CD4-positive, alpha-beta memory T cell (primary cell): ENCODE measurements at regions of chr17 and their contacts with region 1.

Region 1: DNA sequence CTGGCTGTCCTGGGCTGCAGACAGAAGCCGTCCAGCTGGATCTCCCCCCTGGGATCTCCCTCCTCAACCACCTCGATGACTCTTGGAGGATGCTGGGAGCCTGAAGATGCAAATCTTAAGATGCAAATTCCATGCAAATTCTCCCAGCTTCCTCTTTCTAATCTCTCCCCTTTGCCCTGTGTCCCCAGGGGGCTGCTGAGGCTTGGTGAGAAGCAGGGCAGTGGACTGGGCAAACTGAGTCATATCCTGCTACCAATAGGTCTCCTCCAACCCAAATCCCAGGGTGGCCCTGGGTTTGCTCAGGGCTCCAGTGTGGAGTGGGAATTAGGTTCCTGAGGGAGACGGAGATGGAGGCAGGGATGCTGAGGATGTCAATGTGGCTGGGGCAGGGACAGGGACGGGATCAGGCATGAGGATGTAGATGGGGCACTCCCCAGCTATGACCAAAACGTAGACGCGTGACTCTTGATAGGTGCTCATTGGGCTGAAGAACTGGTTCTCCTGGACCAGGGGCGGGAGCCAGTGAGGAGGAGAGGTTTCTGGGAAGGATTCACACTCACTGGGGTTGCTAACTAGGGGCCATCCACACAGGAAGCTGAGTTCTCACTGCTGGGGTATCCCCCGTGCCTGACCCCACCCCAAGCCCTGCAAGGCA is 3.6 kb upstream of the ALOX12B start:
- DNase-seq: no peak
- H3K4me3 ChIP-seq: no peak overlapping the region
- H3K4me3 Mint-ChIP-seq: peak overlapping the region in 1 of 8 donors; percentile 26
- H3K27ac ChIP-seq: no peak overlapping the region
- H3K27ac Mint-ChIP-seq: no peak overlapping the region
- H3K4me1 ChIP-seq: peaks cover 12% of the 10 kb centered on the region
- H3K4me1 Mint-ChIP-seq: peaks cover 5 to 16% (median 12%) of the 10 kb centered on the region in 4 donors
- H3K27me3 ChIP-seq: no peaks in the 10 kb centered on the region
- H3K27me3 Mint-ChIP-seq: peaks cover 17 to 21% of the 10 kb centered on the region in 2 donors

Region 2: GRCh38 chr17:7959503-7960253 is 131.5 kb before region 1 on chr17:
- CTCF ChIA-PET with region 1: no interaction called
- POLR2A ChIA-PET with region 1: no interaction called
- intact Hi-C with region 1: no loop called
- DNase-seq: no peak
- H3K4me3 ChIP-seq: no peak overlapping the region
- H3K4me3 Mint-ChIP-seq: no peak overlapping the region
- H3K27ac ChIP-seq: no peak overlapping the region
- H3K27ac Mint-ChIP-seq: no peak overlapping the region
- H3K4me1 ChIP-seq: no peaks in the 10 kb centered on the region
- H3K4me1 Mint-ChIP-seq: no peaks in the 10 kb centered on the region
- H3K27me3 ChIP-seq: no peaks in the 10 kb centered on the region
- H3K27me3 Mint-ChIP-seq: peaks cover 0 to 6% of the 10 kb centered on the region in 2 donors

Region 3: DNA sequence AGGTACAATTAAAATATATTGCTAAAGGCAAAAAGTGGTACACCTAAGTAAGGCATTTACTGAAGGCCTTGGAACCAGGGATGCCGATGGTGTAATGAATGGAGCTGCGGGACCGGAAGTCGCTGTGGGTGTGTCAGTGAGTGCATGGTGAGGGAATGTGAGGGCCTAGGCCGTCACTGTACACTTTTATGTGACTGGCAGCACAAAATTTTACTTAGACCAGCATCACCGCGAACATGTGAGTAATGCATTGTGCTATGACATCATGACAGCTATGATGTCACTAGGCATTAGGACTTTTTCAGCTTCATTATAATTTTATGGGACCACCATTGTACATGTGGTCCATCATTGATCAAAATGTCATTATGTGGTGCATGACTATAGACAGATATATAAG is 37.6 kb before region 1 on chr17:
- CTCF ChIA-PET with region 1: no interaction called
- POLR2A ChIA-PET with region 1: no interaction called
- intact Hi-C with region 1: no loop called
- DNase-seq: no peak
- H3K4me3 ChIP-seq: no peak overlapping the region
- H3K4me3 Mint-ChIP-seq: no peak overlapping the region
- H3K27ac ChIP-seq: no peak overlapping the region
- H3K27ac Mint-ChIP-seq: no peak overlapping the region
- H3K4me1 ChIP-seq: peaks cover 7% of the 10 kb centered on the region
- H3K4me1 Mint-ChIP-seq: peaks cover 1 to 12% (median 3%) of the 10 kb centered on the region in 4 donors
- H3K27me3 ChIP-seq: peaks cover 4% of the 10 kb centered on the region
- H3K27me3 Mint-ChIP-seq: peaks cover 8 to 11% of the 10 kb centered on the region in 2 donors

Region 4: DNA sequence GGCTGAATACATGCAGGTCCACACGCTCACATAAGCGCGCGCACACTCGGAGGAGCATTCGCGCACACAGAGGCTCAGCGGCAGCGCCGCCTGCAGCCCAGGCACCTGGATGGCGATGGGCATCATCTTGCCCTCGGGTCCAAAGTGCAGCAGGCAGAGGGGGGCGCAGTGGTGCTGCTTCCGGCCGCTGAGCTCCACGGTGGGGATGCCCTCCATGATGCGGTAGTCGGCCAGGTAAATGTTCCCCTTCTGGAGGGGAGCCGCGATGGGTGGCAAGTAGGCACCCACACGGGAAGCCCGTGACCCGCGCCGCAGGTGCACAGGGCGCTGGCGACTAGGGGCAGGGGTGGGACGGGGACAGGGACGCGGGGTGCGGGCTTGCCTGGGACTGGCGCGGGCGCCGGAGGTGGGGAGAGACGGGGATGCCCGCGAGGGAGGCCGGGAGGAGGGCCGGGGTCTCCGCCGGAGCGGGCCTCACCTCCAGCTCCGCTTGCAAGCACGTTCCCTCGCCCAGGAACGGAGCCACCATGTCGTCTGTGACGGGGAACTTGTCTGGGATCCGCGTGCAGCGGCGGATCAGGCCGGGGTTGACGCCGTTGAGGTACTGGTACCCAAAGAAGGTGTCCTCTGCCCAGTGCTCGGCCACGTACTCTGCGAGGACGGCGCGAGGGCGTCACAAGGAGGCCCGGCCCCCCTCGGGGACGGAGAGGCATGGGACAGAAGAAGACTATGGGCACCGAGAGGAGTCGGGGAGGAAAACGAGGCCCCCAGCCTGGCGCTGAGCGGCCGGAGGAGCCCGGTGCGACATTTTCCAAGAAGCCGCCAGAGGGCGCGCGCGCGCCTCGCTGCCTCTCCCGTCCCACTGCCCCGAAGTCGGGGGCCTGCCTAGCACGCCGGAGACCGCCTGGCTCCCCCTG is 11.6 kb before region 1 on chr17:
- CTCF ChIA-PET with region 1: interaction called, 48 read pairs
- POLR2A ChIA-PET with region 1: interaction called, 3 read pairs
- intact Hi-C with region 1: loop called (anchors 2 kb)
- DNase-seq: peak; percentile 76 to 84 (median 77)
- H3K4me3 ChIP-seq: peak overlapping the region in 1 of 2 donors; percentile 70
- H3K4me3 Mint-ChIP-seq: peak overlapping the region; percentile 86 to 93 (median 89)
- H3K27ac ChIP-seq: peak overlapping the region; percentile 63
- H3K27ac Mint-ChIP-seq: peak overlapping the region; percentile 46 to 95 (median 86)
- H3K4me1 ChIP-seq: peaks cover 14% of the 10 kb centered on the region
- H3K4me1 Mint-ChIP-seq: peaks cover 7 to 16% (median 12%) of the 10 kb centered on the region in 4 donors
- H3K27me3 ChIP-seq: peaks cover 3% of the 10 kb centered on the region
- H3K27me3 Mint-ChIP-seq: peaks cover 0 to 6% of the 10 kb centered on the region in 2 donors

Region 5: DNA sequence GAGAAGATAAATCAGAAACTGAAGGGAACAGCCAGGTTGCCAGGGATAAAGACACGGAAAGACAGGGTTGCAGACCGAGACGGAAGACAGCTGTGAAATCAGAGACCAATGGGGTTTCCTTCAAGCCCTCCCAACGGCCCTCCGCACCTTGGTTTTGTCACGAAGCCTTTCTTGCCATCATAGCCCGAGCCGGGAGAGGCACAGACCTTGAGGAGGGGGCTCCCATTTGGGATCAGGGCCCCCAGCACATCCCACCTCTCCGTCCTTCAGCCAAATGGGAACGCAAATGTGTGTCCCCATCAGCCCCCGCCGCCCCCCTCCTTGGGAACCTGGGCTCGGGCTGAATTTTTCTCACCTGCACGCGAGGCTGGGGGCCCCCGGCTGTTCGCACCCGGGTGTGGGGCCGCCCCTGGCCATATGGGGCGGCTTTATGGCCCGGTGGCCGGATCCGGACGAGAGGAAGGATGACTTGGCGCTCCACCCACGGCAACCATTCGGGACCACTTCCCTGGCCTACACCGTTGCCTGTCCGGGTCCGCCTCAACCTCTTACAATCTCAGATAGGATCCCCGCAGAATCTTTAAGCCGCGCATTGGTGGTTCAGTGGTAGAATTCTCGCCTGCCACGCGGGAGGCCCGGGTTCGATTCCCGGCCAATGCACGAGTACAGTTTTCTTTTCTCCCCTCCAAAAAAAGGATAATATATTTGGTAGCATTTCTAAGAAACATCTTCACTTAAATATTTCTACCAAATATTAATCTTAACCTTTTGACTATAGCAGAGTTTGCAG is 34.2 kb after region 1 on chr17:
- CTCF ChIA-PET with region 1: interaction called, 89 read pairs
- POLR2A ChIA-PET with region 1: interaction called, 25 read pairs
- intact Hi-C with region 1: no loop called
- DNase-seq: peak; percentile 83 to 90 (median 87)
- H3K4me3 ChIP-seq: peak overlapping the region; percentile 53 to 68
- H3K4me3 Mint-ChIP-seq: peak overlapping the region; percentile 85 to 99 (median 92)
- H3K27ac ChIP-seq: no peak overlapping the region
- H3K27ac Mint-ChIP-seq: peak overlapping the region; percentile 69 to 100 (median 93)
- H3K4me1 ChIP-seq: peaks cover 63% of the 10 kb centered on the region
- H3K4me1 Mint-ChIP-seq: peaks cover 42 to 62% (median 51%) of the 10 kb centered on the region in 4 donors
- H3K27me3 ChIP-seq: peaks cover 20% of the 10 kb centered on the region
- H3K27me3 Mint-ChIP-seq: peaks cover 10 to 28% of the 10 kb centered on the region in 2 donors

Region 6: GRCh38 chr17:8294814-8295316 is 203.7 kb after region 1 on chr17:
- CTCF ChIA-PET with region 1: interaction called, 41 read pairs
- POLR2A ChIA-PET with region 1: interaction called, 4 read pairs
- intact Hi-C with region 1: loop called (anchors 1 kb)
- DNase-seq: no peak
- H3K4me3 ChIP-seq: peak overlapping the region; percentile 78 to 92
- H3K4me3 Mint-ChIP-seq: peak overlapping the region; percentile 91 to 97 (median 94)
- H3K27ac ChIP-seq: peak overlapping the region; percentile 73
- H3K27ac Mint-ChIP-seq: peak overlapping the region; percentile 92 to 98 (median 96)
- H3K4me1 ChIP-seq: peaks cover 26% of the 10 kb centered on the region
- H3K4me1 Mint-ChIP-seq: peaks cover 18 to 50% (median 29%) of the 10 kb centered on the region in 4 donors
- H3K27me3 ChIP-seq: no peaks in the 10 kb centered on the region
- H3K27me3 Mint-ChIP-seq: no peaks in the 10 kb centered on the region